ENCODE measurements at regions of chr3 and their contacts with region 1.

Region 1: DNA sequence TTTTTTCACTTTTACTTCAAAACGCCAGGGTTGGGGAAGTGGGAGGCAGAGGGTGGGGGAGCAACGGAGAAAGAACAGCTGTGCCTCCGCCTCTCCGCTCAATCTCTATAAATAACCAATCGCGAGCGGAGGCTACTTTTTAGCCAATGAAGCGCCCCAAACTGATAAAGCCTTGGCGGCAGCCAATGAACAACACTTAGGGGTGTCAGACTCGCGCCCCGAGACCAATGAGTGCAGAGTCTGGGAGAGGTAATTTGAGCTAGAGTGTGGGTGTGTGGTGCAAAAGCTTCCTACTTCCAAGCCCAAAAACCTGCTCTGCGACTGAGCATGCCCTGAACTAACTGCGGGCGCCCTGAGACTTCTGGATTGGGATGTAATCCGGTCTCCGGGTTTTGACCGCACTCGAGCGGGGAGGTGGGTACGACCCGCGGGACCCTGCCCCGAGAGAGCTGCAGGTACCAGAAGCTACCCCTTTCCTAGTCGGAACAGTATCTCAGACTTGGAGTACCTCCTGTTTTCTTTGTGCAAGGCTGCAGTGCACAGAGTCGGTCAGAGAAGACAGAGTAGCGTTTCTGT is 800 bp upstream of the RAP2B start:
- DNase-seq: peak; percentile 97 to 98
- H3K4me3 ChIP-seq: peak overlapping the region; percentile 77
- CTCF ChIP-seq: no peak
- POLR2A ChIP-seq: peak in 1 of 2 donors; percentile 21

Region 2: DNA sequence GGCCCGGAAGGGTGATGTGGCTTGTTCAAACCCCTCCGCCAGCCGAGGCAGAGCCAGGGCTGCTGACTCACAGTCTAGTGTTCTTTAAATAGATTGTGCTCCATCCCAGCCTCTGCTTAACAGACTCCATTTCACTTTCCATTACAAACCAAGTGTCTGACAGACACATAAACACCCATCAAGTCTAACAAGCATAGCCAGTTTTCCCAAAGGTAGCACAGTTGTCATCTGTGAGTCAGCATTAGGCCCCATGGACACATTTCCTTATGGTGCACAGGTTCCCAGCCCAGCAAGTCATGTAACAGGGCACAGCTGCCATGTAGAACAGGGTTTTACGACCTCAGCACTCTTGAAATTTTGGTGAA is 109.1 kb before region 1 on chr3:
- intact Hi-C with region 1: loop called (anchors 10 kb)
- DNase-seq: peak in 1 of 2 donors; percentile 42
- H3K4me3 ChIP-seq: no peak overlapping the region
- CTCF ChIP-seq: no peak
- POLR2A ChIP-seq: no peak

Measured in lower leg skin (tissue), 4 donors.